Panc1 (cell line): ENCODE measurements at regions of chr6 and their contacts with region 1.

Region 1: GRCh38 chr6:170124833-170125232 is 166.0 kb downstream of the DLL1 start:
- DNase-seq: no peak
- ATAC-seq: no peak
- H3K4me3 ChIP-seq: no peak overlapping the region
- H3K27ac ChIP-seq: no peak overlapping the region
- H3K4me1 ChIP-seq: no peaks in the 10 kb centered on the region
- H3K27me3 ChIP-seq: no peaks in the 10 kb centered on the region; the same call in 1 of the 2 replicates
- CTCF ChIP-seq: no peak

Region 2: GRCh38 chr6:169937389-169938261 is 187.2 kb before region 1 on chr6:
- CTCF ChIA-PET with region 1: no interaction called
- POLR2A ChIA-PET with region 1: interaction called, 12 read pairs
- in situ Hi-C with region 1: no loop called
- intact Hi-C with region 1: no loop called
- DNase-seq: no peak
- ATAC-seq: no peak
- H3K4me3 ChIP-seq: no peak overlapping the region
- H3K27ac ChIP-seq: no peak overlapping the region
- H3K4me1 ChIP-seq: peaks cover 20% of the 10 kb centered on the region
- H3K27me3 ChIP-seq: peaks cover 8% of the 10 kb centered on the region
- CTCF ChIP-seq: no peak